ENCODE measurements at regions of chr10 and their contacts with region 1.

Region 1: GRCh38 chr10:5446390-5446926 is 34.1 kb downstream of the NET1 start:
- DNase-seq: peak; percentile 79
- H3K4me3 Mint-ChIP-seq: peak overlapping the region; percentile 81
- H3K27ac Mint-ChIP-seq: peak overlapping the region; percentile 89
- H3K4me1 Mint-ChIP-seq: peaks cover 24% of the 10 kb centered on the region
- H3K27me3 Mint-ChIP-seq: no peaks in the 10 kb centered on the region
- CTCF ChIP-seq: no peak

Region 2: DNA sequence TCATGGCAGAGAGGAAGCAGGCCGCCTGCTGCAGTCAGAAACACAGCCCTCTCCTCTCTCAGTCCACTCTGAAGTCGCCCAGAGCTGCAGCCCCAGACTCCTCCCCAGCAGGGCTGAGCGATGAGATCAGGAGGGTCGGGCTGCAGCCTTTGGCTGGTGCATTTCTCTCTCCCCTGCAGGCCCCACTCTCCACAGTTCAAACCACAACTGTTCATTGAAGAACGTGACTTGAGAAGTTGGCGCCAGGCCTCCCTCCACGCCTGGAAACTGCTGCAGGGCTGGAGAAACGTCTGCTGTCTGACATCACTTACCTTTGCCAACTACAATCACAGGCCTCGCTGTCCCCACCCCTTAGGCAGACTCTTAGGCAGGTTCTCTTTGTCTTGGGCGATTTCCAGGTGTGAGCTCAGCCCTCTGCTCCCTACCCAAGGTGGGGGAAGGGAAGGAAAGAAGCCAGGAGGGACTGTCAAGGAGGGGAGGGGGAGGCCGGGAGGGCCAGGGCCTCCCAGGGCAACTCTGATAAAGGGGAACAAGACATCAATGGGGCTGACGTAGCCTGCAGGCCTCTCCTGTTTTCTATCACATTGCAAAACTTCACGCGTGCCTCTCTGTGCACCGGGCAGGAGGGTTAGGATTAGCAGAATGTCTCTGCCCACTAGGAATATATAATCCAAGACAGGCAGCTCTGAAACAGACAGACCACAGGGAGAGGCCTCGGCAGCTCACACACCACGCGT is 20.1 kb after region 1 on chr10:
- CTCF ChIA-PET with region 1: interaction called, 3 read pairs
- POLR2A ChIA-PET with region 1: interaction called, 23 read pairs
- intact Hi-C with region 1: no loop called
- DNase-seq: peak; percentile 91
- H3K4me3 Mint-ChIP-seq: peak overlapping the region; percentile 43
- H3K27ac Mint-ChIP-seq: peak overlapping the region; percentile 78
- H3K4me1 Mint-ChIP-seq: peaks cover 23% of the 10 kb centered on the region
- H3K27me3 Mint-ChIP-seq: no peaks in the 10 kb centered on the region
- CTCF ChIP-seq: no peak

Region 3: GRCh38 chr10:5548527-5549223 is 102.2 kb after region 1 on chr10:
- CTCF ChIA-PET with region 1: interaction called, 7 read pairs
- POLR2A ChIA-PET with region 1: interaction called, 49 read pairs
- intact Hi-C with region 1: loop called (anchors 5 kb)
- DNase-seq: peak; percentile 91
- H3K4me3 Mint-ChIP-seq: no peak overlapping the region
- H3K27ac Mint-ChIP-seq: no peak overlapping the region
- H3K4me1 Mint-ChIP-seq: peaks cover 38% of the 10 kb centered on the region
- H3K27me3 Mint-ChIP-seq: no peaks in the 10 kb centered on the region
- CTCF ChIP-seq: no peak

Region 4: DNA sequence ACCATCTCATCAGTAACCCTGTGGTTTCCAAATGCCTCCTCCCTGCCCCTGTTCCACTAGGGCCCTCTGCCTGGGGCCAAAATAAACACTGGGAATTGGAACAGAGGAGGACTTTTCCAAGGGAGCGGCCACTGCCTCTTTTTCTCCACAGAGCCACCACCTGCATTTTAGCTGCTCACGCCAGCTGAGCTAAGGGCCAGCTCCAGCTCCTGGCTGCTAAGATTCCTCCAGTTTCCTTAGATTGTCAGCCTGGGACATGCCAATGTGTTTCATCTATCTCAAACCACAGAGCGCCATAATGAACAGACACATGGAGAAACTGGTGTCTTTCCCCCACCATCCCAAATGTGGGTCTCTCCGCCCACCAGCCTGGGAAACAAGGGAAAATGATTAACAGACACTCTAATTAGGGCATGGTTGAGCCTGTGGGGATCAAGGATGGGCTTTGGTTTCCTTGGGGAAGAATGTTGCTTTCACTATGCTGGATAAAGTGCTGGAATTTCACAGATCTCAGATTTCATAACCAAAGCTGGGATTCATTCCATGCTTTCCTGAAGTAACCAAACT is 167.8 kb after region 1 on chr10:
- CTCF ChIA-PET with region 1: interaction called, 264 read pairs
- POLR2A ChIA-PET with region 1: interaction called, 61 read pairs
- intact Hi-C with region 1: no loop called
- DNase-seq: peak; percentile 86
- H3K4me3 Mint-ChIP-seq: peak overlapping the region; percentile 19
- H3K27ac Mint-ChIP-seq: peak overlapping the region; percentile 93
- H3K4me1 Mint-ChIP-seq: peaks cover 72% of the 10 kb centered on the region
- H3K27me3 Mint-ChIP-seq: no peaks in the 10 kb centered on the region
- CTCF ChIP-seq: no peak

Region 5: GRCh38 chr10:5873515-5873995 is 427.1 kb after region 1 on chr10:
- CTCF ChIA-PET with region 1: interaction called, 3 read pairs
- POLR2A ChIA-PET with region 1: no interaction called
- intact Hi-C with region 1: loop called (anchors 2 kb)
- DNase-seq: peak; percentile 77
- H3K4me3 Mint-ChIP-seq: no peak overlapping the region
- H3K27ac Mint-ChIP-seq: no peak overlapping the region
- H3K4me1 Mint-ChIP-seq: no peaks in the 10 kb centered on the region
- H3K27me3 Mint-ChIP-seq: no peaks in the 10 kb centered on the region
- CTCF ChIP-seq: peak; percentile 46

Measured in MCF 10A (cell line).